Left cardiac atrium (tissue), 4 donors: ENCODE measurements at regions of chr12 and their contacts with region 1.

Region 1: GRCh38 chr12:46933947-46934346 is 108.2 kb upstream of the SLC38A4 start:
- DNase-seq: no peak
- ATAC-seq: peak; percentile 57 to 71

Region 2: GRCh38 chr12:46124848-46125619 is 808.9 kb before region 1 on chr12:
- intact Hi-C with region 1: loop called in 1 of 2 experiments (anchors 10 kb)
- DNase-seq: peak; percentile 34
- ATAC-seq: peak; percentile 88 to 96

Region 3: GRCh38 chr12:46342562-46343033 is 591.3 kb before region 1 on chr12:
- intact Hi-C with region 1: loop called in 1 of 2 experiments (anchors 5 kb)
- DNase-seq: no peak
- ATAC-seq: peak; percentile 71 to 84

Region 4: GRCh38 chr12:46675736-46676135 is 258.2 kb before region 1 on chr12:
- intact Hi-C with region 1: loop called in 1 of 2 experiments (anchors 2 kb)
- DNase-seq: peak; percentile 34
- ATAC-seq: peak; percentile 34 to 42

Region 5: GRCh38 chr12:46686267-46686942 is 247.5 kb before region 1 on chr12:
- intact Hi-C with region 1: loop called in 1 of 2 experiments (anchors 5 kb)
- DNase-seq: no peak
- ATAC-seq: no peak